Heart left ventricle (tissue), 16 donors: ENCODE measurements at regions of chr5 and their contacts with region 1.

Region 1: DNA sequence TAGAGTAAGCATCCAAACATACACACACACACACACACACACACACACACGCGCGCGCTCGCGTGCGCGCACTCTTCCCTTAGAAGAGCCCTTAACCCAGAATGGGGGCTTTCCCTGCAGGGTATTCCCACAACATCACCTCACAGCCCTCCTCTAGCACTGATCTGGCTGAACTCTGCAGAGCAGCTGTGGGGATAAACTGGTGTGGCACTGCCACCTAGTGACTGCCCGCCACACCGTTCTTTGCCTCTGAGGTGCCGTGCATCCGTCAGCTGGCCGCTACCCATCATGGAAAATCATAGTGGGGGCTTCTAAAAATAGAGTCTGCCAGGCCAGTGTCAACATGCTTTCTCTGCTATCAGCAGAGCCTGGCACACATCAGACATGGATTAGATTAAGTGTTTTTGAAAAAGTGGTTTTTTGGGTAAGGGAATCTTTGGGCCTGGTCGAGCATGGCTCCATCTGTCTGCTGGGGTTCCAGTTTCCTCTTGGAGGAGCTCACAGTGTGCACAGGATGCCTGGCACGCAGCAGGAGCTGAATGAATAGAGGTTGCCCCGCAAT is 88.1 kb downstream of the KCNN2 start:
- DNase-seq: peak; percentile 68 to 81 (median 76)
- ATAC-seq: peak; percentile 94 to 100 (median 99)
- H3K4me3 ChIP-seq: peak overlapping the region in 2 of 12 donors; percentile 16 to 20
- H3K27ac ChIP-seq: peak overlapping the region in 6 of 12 donors; percentile 4 to 57 (median 30)
- H3K4me1 ChIP-seq: peaks cover 0 to 24% (median 8%) of the 10 kb centered on the region in 12 donors
- H3K27me3 ChIP-seq: no peaks in the 10 kb centered on the region
- CTCF ChIP-seq: peak; percentile 73 to 90 (median 81)
- POLR2A ChIP-seq: no peak

Region 2: DNA sequence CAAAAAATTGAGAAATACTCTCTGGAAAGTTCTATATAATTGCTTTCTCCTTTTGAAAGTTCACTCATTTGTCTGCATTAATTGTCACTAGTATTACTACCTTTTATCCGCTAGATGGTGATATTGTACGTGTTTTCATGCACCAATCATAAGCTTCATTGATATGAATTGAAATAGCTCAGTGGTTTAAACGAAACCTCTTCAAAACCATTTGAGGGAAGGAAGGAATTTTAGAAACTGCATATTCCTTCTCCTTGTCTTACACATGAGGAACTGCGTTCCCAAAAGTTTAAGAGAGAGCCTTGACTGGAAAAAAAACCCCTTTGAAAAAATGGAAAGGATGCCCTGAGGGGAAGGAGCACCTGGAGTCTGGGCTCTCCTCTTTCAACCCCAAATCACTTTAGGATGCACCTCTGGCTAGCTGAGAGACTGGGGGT is 837.9 kb before region 1 on chr5:
- intact Hi-C with region 1: loop called in 9 of 10 experiments (anchors 2 to 10 kb)
- DNase-seq: no peak
- ATAC-seq: peak in 1 of 4 donors; percentile 38
- H3K4me3 ChIP-seq: no peak overlapping the region
- H3K27ac ChIP-seq: no peak overlapping the region
- H3K4me1 ChIP-seq: peaks cover 0 to 6% (median 0%) of the 10 kb centered on the region in 12 donors
- H3K27me3 ChIP-seq: no peaks in the 10 kb centered on the region
- CTCF ChIP-seq: peak; percentile 52 to 70 (median 66)
- POLR2A ChIP-seq: no peak

Region 3: DNA sequence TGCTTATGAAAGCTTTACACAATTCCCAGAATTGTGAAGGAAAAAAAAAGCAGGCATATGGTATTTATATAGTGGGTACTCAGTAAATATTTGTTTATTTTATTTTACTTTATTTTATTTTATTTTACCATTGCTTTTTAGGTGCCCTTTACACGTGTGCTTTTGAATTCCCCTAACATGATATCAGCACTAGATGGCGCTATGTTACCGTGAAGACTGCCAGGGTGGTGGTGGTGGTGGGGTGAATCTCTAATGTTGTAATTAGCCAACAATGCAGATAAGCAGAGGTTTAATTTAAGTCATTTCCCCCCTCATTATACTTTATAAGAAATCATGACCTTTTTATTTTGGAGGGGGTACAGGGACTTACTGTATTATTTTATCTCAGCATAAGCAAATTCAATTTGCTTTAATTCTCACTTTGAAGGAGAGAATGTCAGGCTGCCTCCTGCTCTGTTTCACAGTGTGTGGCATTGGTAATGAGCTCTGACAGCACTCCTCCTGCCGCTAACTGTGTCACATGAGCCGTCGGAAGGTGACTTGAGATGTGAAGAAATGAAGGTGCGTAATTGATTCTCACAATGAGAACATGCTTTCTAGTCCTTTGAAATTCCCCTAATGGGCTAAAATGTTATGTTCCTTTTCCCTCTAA is 770.9 kb before region 1 on chr5:
- intact Hi-C with region 1: loop called (anchors 2 to 5 kb)
- DNase-seq: peak in 1 of 5 donors; percentile 13
- ATAC-seq: peak in 3 of 4 donors; percentile 55 to 68 (median 63)
- H3K4me3 ChIP-seq: no peak overlapping the region
- H3K27ac ChIP-seq: no peak overlapping the region
- H3K4me1 ChIP-seq: no peaks in the 10 kb centered on the region
- H3K27me3 ChIP-seq: no peaks in the 10 kb centered on the region
- CTCF ChIP-seq: peak; percentile 33 to 78 (median 67)
- POLR2A ChIP-seq: no peak

Region 4: DNA sequence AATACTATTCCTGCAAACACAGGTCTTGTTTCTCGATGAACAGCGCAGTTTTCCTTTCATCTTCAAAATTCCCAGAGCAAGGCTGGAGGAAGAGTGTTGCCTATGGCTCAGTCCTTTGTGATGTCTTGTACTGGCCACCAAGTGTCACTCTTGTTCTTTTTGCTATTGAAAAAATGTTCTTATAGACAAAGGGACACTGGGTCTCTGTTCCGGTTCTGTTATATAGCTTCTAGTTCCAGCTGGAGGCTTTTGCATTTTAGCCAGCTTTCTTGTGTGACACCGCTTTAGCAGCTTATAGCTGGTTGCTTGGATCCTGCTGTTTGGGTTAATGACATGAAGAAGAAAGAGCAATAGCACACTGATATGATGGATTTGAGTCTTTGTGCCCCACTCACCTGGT is 431.8 kb before region 1 on chr5:
- intact Hi-C with region 1: loop called in 9 of 10 experiments (anchors 2 to 10 kb)
- DNase-seq: no peak
- ATAC-seq: peak in 3 of 4 donors; percentile 54 to 58 (median 55)
- H3K4me3 ChIP-seq: no peak overlapping the region
- H3K27ac ChIP-seq: no peak overlapping the region
- H3K4me1 ChIP-seq: no peaks in the 10 kb centered on the region
- H3K27me3 ChIP-seq: peaks cover 0 to 5% (median 0%) of the 10 kb centered on the region in 9 donors
- CTCF ChIP-seq: peak in 11 of 12 donors; percentile 3 to 66 (median 45)
- POLR2A ChIP-seq: no peak

Region 5: GRCh38 chr5:114101153-114101552 is 348.8 kb before region 1 on chr5:
- intact Hi-C with region 1: loop called (anchors 2 to 10 kb)
- DNase-seq: peak in 1 of 5 donors; percentile 18
- ATAC-seq: peak in 2 of 4 donors; percentile 62 to 63
- H3K4me3 ChIP-seq: no peak overlapping the region
- H3K27ac ChIP-seq: no peak overlapping the region
- H3K4me1 ChIP-seq: no peaks in the 10 kb centered on the region
- H3K27me3 ChIP-seq: no peaks in the 10 kb centered on the region
- CTCF ChIP-seq: peak; percentile 44 to 76 (median 66)
- POLR2A ChIP-seq: no peak

Region 6: DNA sequence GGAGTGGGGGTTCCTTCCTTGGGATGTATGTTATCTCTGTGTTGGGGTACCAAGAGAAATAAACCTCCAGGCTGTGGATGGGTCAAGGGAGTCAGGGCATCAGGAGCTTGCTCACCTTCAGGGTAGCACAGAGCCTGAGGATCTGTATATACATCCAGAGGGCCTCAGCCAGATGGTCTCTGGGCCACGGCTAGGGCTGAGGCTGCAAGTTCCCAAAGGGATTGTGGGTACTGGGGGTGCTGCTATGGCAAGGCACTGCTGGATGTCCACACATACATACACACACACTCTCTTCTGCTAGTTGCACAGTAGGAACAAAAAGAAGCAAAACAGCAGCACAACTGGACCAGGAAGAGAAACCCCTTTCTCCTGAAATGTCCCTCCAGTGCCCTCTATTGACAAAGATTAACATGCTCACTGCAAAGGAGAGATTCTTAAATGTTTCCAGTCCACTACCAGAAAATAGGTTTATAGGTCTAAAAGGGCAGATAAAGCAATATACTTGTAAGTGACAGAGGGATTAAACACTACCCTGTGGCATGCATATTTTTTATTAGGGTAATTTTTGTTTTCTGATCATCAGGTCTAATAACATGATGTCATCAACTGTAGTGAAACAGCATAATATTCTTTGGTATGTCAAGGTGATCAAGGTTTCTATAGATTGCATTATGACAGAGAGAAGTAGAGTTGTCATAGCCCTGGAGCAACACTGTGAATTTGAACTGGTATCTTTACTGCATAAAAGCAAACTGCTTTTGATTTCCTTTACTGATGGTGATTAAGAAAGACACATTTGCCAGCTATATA is 144.3 kb before region 1 on chr5:
- intact Hi-C with region 1: loop called in 2 of 10 experiments (anchors 5 to 10 kb)
- DNase-seq: no peak
- ATAC-seq: peak in 2 of 4 donors; percentile 28 to 50
- H3K4me3 ChIP-seq: no peak overlapping the region
- H3K27ac ChIP-seq: no peak overlapping the region
- H3K4me1 ChIP-seq: no peaks in the 10 kb centered on the region
- H3K27me3 ChIP-seq: no peaks in the 10 kb centered on the region
- CTCF ChIP-seq: peak; percentile 16 to 64 (median 42)
- POLR2A ChIP-seq: no peak

Region 7: GRCh38 chr5:114361724-114362196 is 88.2 kb before region 1 on chr5 and contains the start of gene KCNN2:
- intact Hi-C with region 1: loop called in 7 of 10 experiments (anchors 2 to 10 kb)
- DNase-seq: peak; percentile 87 to 91 (median 90)
- ATAC-seq: peak; percentile 96 to 99 (median 98)
- H3K4me3 ChIP-seq: peak within 1 kb of the TSS; percentile 51 to 95 (median 72)
- H3K27ac ChIP-seq: peak within 1 kb of the TSS in 10 of 12 donors; percentile 45 to 80 (median 70)
- H3K4me1 ChIP-seq: peaks cover 0 to 38% (median 15%) of the 10 kb centered on the region in 12 donors
- H3K27me3 ChIP-seq: peaks cover 0 to 60% (median 16%) of the 10 kb centered on the region in 9 donors
- CTCF ChIP-seq: no peak
- POLR2A ChIP-seq: peak in 1 of 2 donors; percentile 35
- total RNA-seq, gene KCNN2: 4.7 to 11.6 (median 6.7) TPM